PC-3 (cell line): ENCODE measurements at regions of chr2 and their contacts with region 1.

Region 1: GRCh38 chr2:185208261-185208660 is 530.3 kb upstream of the FSIP2 start:
- DNase-seq: peak; percentile 70
- ATAC-seq: peak; percentile 98
- H3K4me3 ChIP-seq: no peak overlapping the region
- H3K27ac ChIP-seq: no peak overlapping the region
- H3K4me1 ChIP-seq: no peaks in the 10 kb centered on the region
- H3K27me3 ChIP-seq: no peaks in the 10 kb centered on the region
- CTCF ChIP-seq: peak; percentile 89

Region 2: GRCh38 chr2:183248866-183249567 is 1959.2 kb before region 1 on chr2:
- CTCF ChIA-PET with region 1: no interaction called
- POLR2A ChIA-PET with region 1: no interaction called
- intact Hi-C with region 1: loop called (anchors 5 kb)
- DNase-seq: peak; percentile 69
- ATAC-seq: peak; percentile 70
- H3K4me3 ChIP-seq: no peak overlapping the region
- H3K27ac ChIP-seq: no peak overlapping the region
- H3K4me1 ChIP-seq: no peaks in the 10 kb centered on the region
- H3K27me3 ChIP-seq: no peaks in the 10 kb centered on the region
- CTCF ChIP-seq: peak; percentile 81

Region 3: GRCh38 chr2:185274718-185275484 is 66.6 kb after region 1 on chr2:
- CTCF ChIA-PET with region 1: no interaction called
- POLR2A ChIA-PET with region 1: interaction called, 14 read pairs
- intact Hi-C with region 1: loop called (anchors 1 kb)
- DNase-seq: no peak
- ATAC-seq: no peak
- H3K4me3 ChIP-seq: no peak overlapping the region
- H3K27ac ChIP-seq: no peak overlapping the region
- H3K4me1 ChIP-seq: 0 out of 2 replicates have a peak, but pooled peaks cover 4% of the 10 kb centered on the region
- H3K27me3 ChIP-seq: no peaks in the 10 kb centered on the region
- CTCF ChIP-seq: no peak

Region 4: GRCh38 chr2:185279999-185280398 is 71.7 kb after region 1 on chr2:
- CTCF ChIA-PET with region 1: no interaction called
- POLR2A ChIA-PET with region 1: no interaction called
- intact Hi-C with region 1: loop called (anchors 1 kb)
- DNase-seq: peak; percentile 57
- ATAC-seq: no peak
- H3K4me3 ChIP-seq: no peak overlapping the region
- H3K27ac ChIP-seq: no peak overlapping the region
- H3K4me1 ChIP-seq: 0 out of 2 replicates have a peak, but pooled peaks cover 4% of the 10 kb centered on the region
- H3K27me3 ChIP-seq: no peaks in the 10 kb centered on the region
- CTCF ChIP-seq: peak; percentile 78

Region 5: GRCh38 chr2:185374878-185375277 is 166.6 kb after region 1 on chr2:
- CTCF ChIA-PET with region 1: no interaction called
- POLR2A ChIA-PET with region 1: interaction called, 15 read pairs
- intact Hi-C with region 1: no loop called
- DNase-seq: peak; percentile 37
- ATAC-seq: peak; percentile 64
- H3K4me3 ChIP-seq: no peak overlapping the region
- H3K27ac ChIP-seq: no peak overlapping the region
- H3K4me1 ChIP-seq: no peaks in the 10 kb centered on the region
- H3K27me3 ChIP-seq: no peaks in the 10 kb centered on the region
- CTCF ChIP-seq: no peak

Region 6: GRCh38 chr2:185404578-185404977 is 196.3 kb after region 1 on chr2:
- CTCF ChIA-PET with region 1: no interaction called
- POLR2A ChIA-PET with region 1: no interaction called
- intact Hi-C with region 1: loop called (anchors 5 kb)
- DNase-seq: no peak
- ATAC-seq: 0 out of 2 replicates have a peak, but pooled peaks have one; percentile 31
- H3K4me3 ChIP-seq: no peak overlapping the region
- H3K27ac ChIP-seq: no peak overlapping the region
- H3K4me1 ChIP-seq: no peaks in the 10 kb centered on the region
- H3K27me3 ChIP-seq: no peaks in the 10 kb centered on the region
- CTCF ChIP-seq: peak; percentile 44

Region 7: DNA sequence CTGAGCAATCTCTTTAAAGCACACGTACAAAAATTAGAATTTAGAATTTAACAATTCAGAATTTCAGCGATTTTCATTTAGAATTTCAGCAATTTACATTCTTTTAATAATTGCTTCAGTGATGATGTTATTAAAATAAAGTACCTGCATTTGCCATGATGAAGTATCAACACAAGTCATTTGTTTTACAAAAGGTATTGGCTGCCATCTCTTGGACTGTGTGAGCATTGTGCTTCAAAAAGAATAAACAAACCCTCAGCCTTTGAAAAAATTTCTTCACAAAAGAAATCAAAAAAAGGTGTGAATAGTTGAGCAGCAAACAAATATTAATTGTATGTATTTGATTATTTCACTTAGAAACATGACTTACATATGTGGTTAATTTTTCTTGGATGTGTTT is 1250.7 kb after region 1 on chr2:
- CTCF ChIA-PET with region 1: no interaction called
- POLR2A ChIA-PET with region 1: no interaction called
- intact Hi-C with region 1: loop called (anchors 5 kb)
- DNase-seq: peak; percentile 68
- ATAC-seq: peak; percentile 50
- H3K4me3 ChIP-seq: no peak overlapping the region
- H3K27ac ChIP-seq: no peak overlapping the region
- H3K4me1 ChIP-seq: peaks cover 16% of the 10 kb centered on the region
- H3K27me3 ChIP-seq: no peaks in the 10 kb centered on the region
- CTCF ChIP-seq: peak; percentile 75